Tibial artery (tissue), 4 donors: ENCODE measurements at regions of chr13 and their contacts with region 1.

Region 1: GRCh38 chr13:75537401-75538365 is at the start of gene COMMD6:
- DNase-seq: peak; percentile 64 to 88
- H3K4me3 ChIP-seq: peak within 1 kb of the TSS; percentile 77 to 79
- H3K27ac ChIP-seq: peak within 1 kb of the TSS; percentile 81 to 82
- H3K4me1 ChIP-seq: peaks cover 0 to 19% (median 11%) of the 10 kb centered on the region in 4 donors
- H3K27me3 ChIP-seq: no peaks in the 10 kb centered on the region
- CTCF ChIP-seq: peak; percentile 55 to 76

Region 2: DNA sequence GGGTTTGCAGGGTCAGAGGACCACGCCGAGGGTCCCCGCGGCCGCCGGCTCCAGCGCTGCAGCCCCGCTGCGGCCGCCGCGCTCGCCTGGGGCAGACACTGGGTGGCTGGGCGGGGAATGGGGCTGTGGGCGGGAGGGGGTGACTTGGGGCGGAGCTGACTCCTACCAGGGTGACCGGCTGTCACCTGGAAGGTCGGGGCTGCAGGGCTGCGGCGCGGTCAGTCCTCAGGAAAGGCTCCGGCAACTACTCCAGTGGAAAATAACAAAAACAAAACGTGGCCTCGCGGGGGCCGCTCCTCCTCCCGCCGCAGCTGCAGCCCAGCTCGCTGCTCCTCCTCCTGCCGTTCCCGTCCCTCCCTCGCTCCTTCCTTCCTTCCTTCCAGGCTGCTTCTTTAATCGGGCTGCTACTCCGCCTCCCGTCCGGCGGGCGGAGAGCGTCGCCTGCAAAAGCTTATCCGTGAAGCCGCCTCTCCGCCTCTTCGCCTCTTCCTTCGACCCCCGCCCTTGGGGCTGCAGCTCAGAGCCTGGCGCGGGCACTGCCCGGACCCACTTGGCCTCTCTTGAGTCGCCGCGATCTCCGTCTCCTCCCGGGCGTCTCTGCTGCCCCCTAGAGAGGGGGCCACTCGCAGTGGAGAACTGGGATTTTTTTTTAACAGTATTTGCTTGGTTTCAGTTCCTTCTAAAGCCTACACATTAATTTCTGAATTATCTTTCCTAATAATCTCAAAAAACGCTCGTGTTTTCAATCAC is 55.4 kb before region 1 on chr13 and contains the start of gene TBC1D4:
- intact Hi-C with region 1: loop called (anchors 5 kb)
- DNase-seq: peak; percentile 83 to 90
- H3K4me3 ChIP-seq: peak within 1 kb of the TSS; percentile 79 to 87
- H3K27ac ChIP-seq: peak within 1 kb of the TSS; percentile 51 to 75
- H3K4me1 ChIP-seq: peaks cover 0 to 11% (median 4%) of the 10 kb centered on the region in 4 donors
- H3K27me3 ChIP-seq: no peaks in the 10 kb centered on the region
- CTCF ChIP-seq: peak; percentile 39 to 76

Region 3: GRCh38 chr13:75621147-75621546 is 83.5 kb after region 1 on chr13:
- intact Hi-C with region 1: no loop called
- DNase-seq: no peak
- H3K4me3 ChIP-seq: no peak overlapping the region
- H3K27ac ChIP-seq: no peak overlapping the region
- H3K4me1 ChIP-seq: peaks cover 0 to 43% (median 1%) of the 10 kb centered on the region in 4 donors
- H3K27me3 ChIP-seq: no peaks in the 10 kb centered on the region
- CTCF ChIP-seq: no peak